ENCODE measurements at regions of chr3 and their contacts with region 1.

Region 1: DNA sequence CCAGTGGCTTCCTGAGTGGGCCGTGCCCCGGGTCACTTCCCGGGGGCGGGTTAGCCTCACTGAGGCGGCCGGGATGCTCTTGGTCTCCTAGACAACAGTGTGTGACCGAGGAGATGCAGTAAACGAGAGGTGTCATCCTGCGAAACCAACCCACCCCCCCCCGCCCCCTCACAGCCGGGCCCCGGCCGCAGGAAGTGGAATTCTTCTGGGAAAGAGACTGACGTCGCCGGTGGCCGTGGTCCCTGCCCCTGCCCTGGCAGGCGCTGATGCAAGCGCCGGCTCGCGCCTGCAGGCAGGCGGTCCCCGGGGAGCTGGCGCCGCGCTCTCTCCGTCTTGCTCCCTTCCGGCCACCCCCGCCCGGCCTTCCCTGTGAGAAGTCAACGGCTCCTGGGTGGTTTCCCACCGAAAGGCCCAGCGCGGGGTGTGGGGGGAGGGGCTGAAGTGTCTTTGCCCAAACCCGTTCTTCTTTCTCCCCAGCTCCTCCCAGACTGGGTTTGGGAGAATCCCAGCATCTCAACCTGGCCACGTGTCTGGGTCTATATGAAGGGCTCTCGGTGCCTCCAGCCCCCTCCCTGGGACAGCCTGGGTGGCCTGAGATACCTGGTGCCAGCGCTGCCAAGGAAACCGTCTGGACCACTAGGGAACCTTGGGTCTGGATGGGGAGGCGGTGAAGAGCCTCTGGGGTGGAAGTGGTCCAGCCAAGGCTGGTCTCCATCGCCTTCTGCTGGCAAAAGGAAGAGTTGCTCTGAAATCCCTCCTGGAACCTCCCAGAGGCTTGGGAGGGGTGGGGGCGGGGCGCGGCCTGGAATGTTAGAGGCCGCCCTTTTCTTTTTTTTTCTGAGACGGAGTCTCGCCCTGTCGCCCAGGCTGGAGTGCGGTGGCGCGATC is 47.3 kb downstream of the BHLHE40 start:
- DNase-seq: peak in 8 of 9 experiments; percentile 41 to 90 (median 66)
- ATAC-seq: peak; percentile 74
- H3K4me3 ChIP-seq: peak overlapping the region; percentile 57 to 77
- H3K4me3 Mint-ChIP-seq: peak overlapping the region; percentile 80
- H3K27ac ChIP-seq: peak overlapping the region; percentile 33 to 39
- H3K27ac Mint-ChIP-seq: peak overlapping the region; percentile 77
- H3K4me1 ChIP-seq: peaks cover 4% of the 10 kb centered on the region
- H3K4me1 Mint-ChIP-seq: peaks cover 12% of the 10 kb centered on the region
- H3K27me3 ChIP-seq: no peaks in the 10 kb centered on the region
- H3K27me3 Mint-ChIP-seq: peaks cover 6% of the 10 kb centered on the region
- CTCF ChIP-seq: peak; percentile 52

Region 2: DNA sequence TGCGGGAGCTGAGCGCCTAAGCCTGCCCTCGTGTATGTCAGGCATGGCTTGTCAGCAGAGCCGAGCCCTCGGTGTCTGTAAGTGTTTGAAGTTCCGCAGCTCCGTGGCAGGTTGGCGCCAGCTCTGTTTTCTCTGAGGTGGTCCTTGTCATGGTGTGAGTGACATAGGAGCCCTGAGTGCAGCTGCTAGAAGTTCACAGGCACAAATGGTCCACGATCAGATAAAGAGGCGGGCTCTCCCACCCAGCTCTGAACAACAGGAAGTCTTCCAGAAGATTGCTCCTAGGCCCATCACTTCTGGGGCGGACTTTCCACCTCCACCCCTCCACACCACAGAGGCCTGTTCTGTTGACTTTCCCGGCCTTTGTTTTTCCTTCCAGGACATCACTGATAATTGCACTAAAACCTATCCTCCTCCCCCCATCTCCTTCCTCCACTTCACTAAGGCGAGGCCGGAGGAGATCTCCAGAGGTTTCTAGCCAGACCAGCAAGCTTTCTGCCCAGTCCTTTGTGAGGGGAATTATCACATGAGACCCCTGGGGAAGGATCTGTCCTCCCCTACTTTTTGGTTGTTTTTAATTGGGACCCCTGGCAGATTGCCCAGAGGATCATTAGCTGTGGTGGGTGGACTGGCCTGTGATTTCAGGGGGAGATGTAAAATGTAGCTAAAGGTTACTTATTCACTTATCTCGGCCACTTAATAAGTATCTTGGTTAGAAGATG is 513.5 kb before region 1 on chr3:
- CTCF ChIA-PET with region 1: no interaction called
- POLR2A ChIA-PET with region 1: no interaction called
- intact Hi-C with region 1: loop called in 1 of 2 experiments (anchors 10 kb)
- DNase-seq: peak in 1 of 9 experiments; percentile 27
- ATAC-seq: peak; percentile 62
- H3K4me3 ChIP-seq: no peak overlapping the region
- H3K4me3 Mint-ChIP-seq: no peak overlapping the region
- H3K27ac ChIP-seq: no peak overlapping the region
- H3K27ac Mint-ChIP-seq: peak overlapping the region; percentile 14
- H3K4me1 ChIP-seq: peaks cover 24% of the 10 kb centered on the region
- H3K4me1 Mint-ChIP-seq: peaks cover 56% of the 10 kb centered on the region
- H3K27me3 ChIP-seq: no peaks in the 10 kb centered on the region
- H3K27me3 Mint-ChIP-seq: no peaks in the 10 kb centered on the region
- CTCF ChIP-seq: no peak

Region 3: GRCh38 chr3:4986782-4987537 is 39.6 kb before region 1 on chr3:
- CTCF ChIA-PET with region 1: interaction called, 19 read pairs
- POLR2A ChIA-PET with region 1: interaction called, 3 read pairs
- intact Hi-C with region 1: loop called in 1 of 2 experiments (anchors 2 kb)
- DNase-seq: peak; percentile 56 to 86 (median 70)
- ATAC-seq: peak; percentile 35
- H3K4me3 ChIP-seq: peak overlapping the region; percentile 52 to 59
- H3K4me3 Mint-ChIP-seq: peak overlapping the region; percentile 83
- H3K27ac ChIP-seq: peak overlapping the region; percentile 19 to 74
- H3K27ac Mint-ChIP-seq: peak overlapping the region; percentile 88
- H3K4me1 ChIP-seq: peaks cover 43% of the 10 kb centered on the region
- H3K4me1 Mint-ChIP-seq: peaks cover 39% of the 10 kb centered on the region
- H3K27me3 ChIP-seq: no peaks in the 10 kb centered on the region
- H3K27me3 Mint-ChIP-seq: no peaks in the 10 kb centered on the region
- CTCF ChIP-seq: no peak

Region 4: GRCh38 chr3:5057857-5058324 is 31.3 kb after region 1 on chr3:
- CTCF ChIA-PET with region 1: no interaction called
- POLR2A ChIA-PET with region 1: no interaction called
- intact Hi-C with region 1: loop called in 1 of 2 experiments (anchors 2 kb)
- DNase-seq: peak; percentile 34 to 87 (median 69)
- ATAC-seq: peak; percentile 96
- H3K4me3 ChIP-seq: no peak overlapping the region
- H3K4me3 Mint-ChIP-seq: no peak overlapping the region
- H3K27ac ChIP-seq: no peak overlapping the region
- H3K27ac Mint-ChIP-seq: no peak overlapping the region
- H3K4me1 ChIP-seq: no peaks in the 10 kb centered on the region
- H3K4me1 Mint-ChIP-seq: no peaks in the 10 kb centered on the region
- H3K27me3 ChIP-seq: peaks cover 0 to 4% of the 10 kb centered on the region in 2 experiments
- H3K27me3 Mint-ChIP-seq: peaks cover 2% of the 10 kb centered on the region
- CTCF ChIP-seq: peak; percentile 63

Measured in CD8-positive, alpha-beta T cell (primary cell).